HEK293T (cell line): ENCODE measurements at regions of chr15 and their contacts with region 1.

Region 1: DNA sequence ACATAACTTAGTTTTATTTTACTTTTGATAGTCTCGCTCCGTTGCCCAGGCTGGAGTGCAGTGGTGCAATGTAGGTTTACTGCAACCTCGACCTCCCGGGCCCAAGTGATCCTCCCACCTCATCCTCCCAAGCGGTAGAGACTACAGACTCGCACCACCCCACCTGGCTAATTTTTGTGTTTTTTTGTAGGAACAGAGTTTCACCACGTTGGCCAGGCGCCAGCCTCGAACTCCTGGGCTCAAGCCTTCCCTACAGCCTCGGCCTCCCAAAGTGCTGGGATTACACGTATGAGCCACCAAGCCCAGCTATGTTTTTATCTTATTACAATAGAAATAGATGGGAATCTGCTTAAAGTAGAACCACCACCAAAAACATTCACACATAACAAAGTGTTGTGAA is 2.9 kb downstream of the RNU5A-1 start:
- DNase-seq: no peak

Region 2: GRCh38 chr15:65184868-65185738 is 113.6 kb before region 1 on chr15 and contains the start of gene CLPX:
- CTCF ChIA-PET with region 1: interaction called, 4 read pairs
- POLR2A ChIA-PET with region 1: interaction called, 32 read pairs
- DNase-seq: peak; percentile 82

Region 3: GRCh38 chr15:65215496-65215895 is 83.2 kb before region 1 on chr15:
- CTCF ChIA-PET with region 1: no interaction called
- POLR2A ChIA-PET with region 1: no interaction called
- DNase-seq: no peak